ENCODE measurements at regions of chr2 and their contacts with region 1.

Region 1: DNA sequence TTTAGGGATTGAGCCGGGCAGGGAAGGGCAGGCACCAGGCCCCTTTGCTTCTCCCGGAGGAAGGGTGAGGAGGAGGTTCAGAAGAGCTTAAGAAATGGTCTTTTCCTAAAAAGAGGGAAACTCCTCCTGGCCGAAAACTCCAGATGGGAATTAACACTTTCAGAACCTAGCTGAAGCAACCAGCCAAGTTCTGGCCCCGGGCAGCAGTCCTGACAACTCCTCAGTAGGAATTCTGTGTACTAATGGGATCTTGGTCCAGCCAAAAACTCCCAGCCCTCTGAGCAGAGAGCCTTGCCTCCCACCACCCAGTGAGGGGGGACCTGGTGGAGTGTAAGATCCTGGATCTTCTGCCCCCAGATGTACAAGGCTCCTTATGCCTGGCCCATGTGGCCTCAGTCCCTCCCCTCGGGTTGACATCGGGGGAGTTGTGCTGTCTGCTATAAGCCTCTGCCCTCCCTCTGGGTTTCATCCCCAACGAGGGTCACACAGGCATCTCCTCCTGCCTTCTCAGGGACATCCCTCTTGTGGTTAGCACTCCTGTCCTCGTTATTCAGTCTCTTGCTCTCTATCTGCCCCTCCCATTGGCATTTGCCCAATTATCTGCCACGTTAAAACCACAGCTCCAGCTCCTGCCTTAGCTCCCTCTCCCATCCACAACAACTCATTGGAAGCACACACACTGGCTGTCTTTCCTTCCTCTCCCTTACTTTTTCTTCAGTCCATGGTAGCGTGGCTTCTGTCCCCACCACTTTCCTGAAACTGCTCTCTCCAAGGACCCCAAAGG is 184.6 kb downstream of the CYP26B1 start:
- DNase-seq: no peak
- H3K4me3 ChIP-seq: no peak overlapping the region
- H3K27ac ChIP-seq: no peak overlapping the region
- H3K4me1 ChIP-seq: peaks cover 0 to 2% (median 0%) of the 10 kb centered on the region in 4 donors
- H3K27me3 ChIP-seq: no peaks in the 10 kb centered on the region
- CTCF ChIP-seq: no peak
- EP300 ChIP-seq: no peak
- POLR2A ChIP-seq: no peak

Region 2: GRCh38 chr2:71901466-71901865 is 61.6 kb before region 1 on chr2:
- in situ Hi-C with region 1: no loop called
- intact Hi-C with region 1: loop called (anchors 2 kb)
- DNase-seq: no peak
- H3K4me3 ChIP-seq: no peak overlapping the region
- H3K27ac ChIP-seq: no peak overlapping the region
- H3K4me1 ChIP-seq: no peaks in the 10 kb centered on the region
- H3K27me3 ChIP-seq: peaks cover 14% of the 10 kb centered on the region
- CTCF ChIP-seq: no peak
- EP300 ChIP-seq: no peak
- POLR2A ChIP-seq: no peak

Region 3: GRCh38 chr2:72793798-72794440 is 830.8 kb after region 1 on chr2:
- in situ Hi-C with region 1: no loop called
- intact Hi-C with region 1: no loop called
- DNase-seq: no peak
- H3K4me3 ChIP-seq: no peak overlapping the region
- H3K27ac ChIP-seq: no peak overlapping the region
- H3K4me1 ChIP-seq: peaks cover 0 to 19% (median 5%) of the 10 kb centered on the region in 4 donors
- H3K27me3 ChIP-seq: no peaks in the 10 kb centered on the region
- CTCF ChIP-seq: no peak
- EP300 ChIP-seq: no peak
- POLR2A ChIP-seq: no peak